ENCODE measurements at regions of chr20 and their contacts with region 1.

Region 1: GRCh38 chr20:4108495-4109306 is 93.3 kb upstream of the RNF24 start:
- DNase-seq: peak; percentile 26 to 79 (median 62)
- ATAC-seq: peak; percentile 82
- H3K4me3 ChIP-seq: no peak overlapping the region
- H3K4me3 Mint-ChIP-seq: no peak overlapping the region
- H3K27ac ChIP-seq: no peak overlapping the region
- H3K27ac Mint-ChIP-seq: no peak overlapping the region
- H3K4me1 ChIP-seq: no peaks in the 10 kb centered on the region
- H3K4me1 Mint-ChIP-seq: peaks cover 4% of the 10 kb centered on the region
- H3K27me3 ChIP-seq: peaks cover 0 to 3% of the 10 kb centered on the region in 2 experiments
- H3K27me3 Mint-ChIP-seq: peaks cover 5% of the 10 kb centered on the region
- CTCF ChIP-seq: peak; percentile 85

Region 2: DNA sequence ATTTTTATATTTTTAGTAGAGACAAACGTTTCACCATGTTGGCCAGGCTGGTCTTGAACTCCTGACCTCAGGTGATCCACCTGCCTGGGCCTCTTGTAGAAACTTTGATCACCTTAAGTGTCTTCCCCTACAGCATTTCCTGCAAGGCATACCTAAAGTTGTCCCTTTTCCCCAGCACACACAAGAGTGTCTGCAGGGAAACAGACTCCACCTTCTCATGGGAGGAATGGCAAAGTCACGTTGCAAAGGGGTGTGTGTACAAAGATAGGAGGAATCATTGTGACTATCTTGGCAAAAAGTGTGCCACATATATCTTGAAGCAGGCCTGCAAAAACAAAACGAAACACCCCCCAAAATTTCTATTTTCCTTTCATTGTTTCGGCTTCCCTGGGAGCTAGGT is 67.5 kb after region 1 on chr20:
- CTCF ChIA-PET with region 1: interaction called, 13 read pairs
- POLR2A ChIA-PET with region 1: no interaction called
- intact Hi-C with region 1: no loop called
- DNase-seq: no peak
- ATAC-seq: no peak
- H3K4me3 ChIP-seq: no peak overlapping the region
- H3K4me3 Mint-ChIP-seq: no peak overlapping the region
- H3K27ac ChIP-seq: no peak overlapping the region
- H3K27ac Mint-ChIP-seq: no peak overlapping the region
- H3K4me1 ChIP-seq: peaks cover 16% of the 10 kb centered on the region
- H3K4me1 Mint-ChIP-seq: peaks cover 16% of the 10 kb centered on the region
- H3K27me3 ChIP-seq: no peaks in the 10 kb centered on the region
- H3K27me3 Mint-ChIP-seq: no peaks in the 10 kb centered on the region
- CTCF ChIP-seq: no peak

Region 3: DNA sequence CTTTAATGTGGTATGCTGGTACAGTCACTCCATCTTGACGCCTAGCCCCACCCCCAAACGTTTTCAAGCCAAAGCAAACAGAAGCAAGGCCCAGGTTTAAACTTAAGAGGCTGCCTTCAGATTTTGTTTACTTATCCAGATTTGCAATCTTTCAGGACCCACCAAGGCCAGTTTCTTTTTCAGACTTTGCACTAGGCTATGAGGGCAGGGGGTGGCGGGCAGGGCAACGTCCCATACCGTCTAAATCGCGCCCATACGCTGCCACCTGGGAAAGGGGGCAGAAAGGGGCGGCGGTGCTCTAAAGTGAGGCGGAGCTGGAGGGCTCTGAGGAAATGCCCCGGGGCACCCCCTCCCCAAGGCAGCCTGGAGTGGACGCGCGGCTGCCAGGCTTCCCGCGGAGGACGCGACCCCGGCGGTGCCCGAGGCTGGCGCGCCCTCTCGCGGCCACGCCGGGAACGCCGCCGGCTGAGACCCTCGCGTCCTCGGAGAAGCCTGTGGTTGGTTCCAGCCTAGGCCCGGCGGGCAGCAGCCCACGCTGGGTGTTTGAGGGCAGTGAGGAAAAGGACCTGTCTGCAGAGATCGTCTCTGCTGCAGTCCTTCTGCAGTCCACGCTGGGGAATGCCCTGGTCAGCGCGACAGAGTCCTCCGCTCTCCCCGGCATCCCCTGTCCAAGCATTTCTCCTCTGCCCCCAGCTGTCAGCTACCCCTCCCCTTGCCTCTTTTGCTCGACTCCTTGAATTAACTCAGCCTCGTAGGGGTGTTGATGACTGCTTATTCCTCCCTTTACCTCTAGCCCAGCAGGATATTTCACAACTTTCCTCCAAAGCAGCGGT is 483.8 kb after region 1 on chr20:
- CTCF ChIA-PET with region 1: interaction called, 9 read pairs
- POLR2A ChIA-PET with region 1: no interaction called
- intact Hi-C with region 1: loop called in 1 of 2 experiments (anchors 1 kb)
- DNase-seq: peak; percentile 11 to 77 (median 50)
- ATAC-seq: peak; percentile 79
- H3K4me3 ChIP-seq: peak overlapping the region; percentile 30 to 61
- H3K4me3 Mint-ChIP-seq: peak overlapping the region; percentile 78
- H3K27ac ChIP-seq: no peak overlapping the region
- H3K27ac Mint-ChIP-seq: no peak overlapping the region
- H3K4me1 ChIP-seq: peaks cover 15% of the 10 kb centered on the region
- H3K4me1 Mint-ChIP-seq: peaks cover 9% of the 10 kb centered on the region
- H3K27me3 ChIP-seq: peaks cover 0 to 3% of the 10 kb centered on the region in 2 experiments
- H3K27me3 Mint-ChIP-seq: peaks cover 14% of the 10 kb centered on the region
- CTCF ChIP-seq: peak; percentile 94

Measured in CD8-positive, alpha-beta T cell (primary cell).